ENCODE measurements at regions of chr9 and their contacts with region 1.

Region 1: DNA sequence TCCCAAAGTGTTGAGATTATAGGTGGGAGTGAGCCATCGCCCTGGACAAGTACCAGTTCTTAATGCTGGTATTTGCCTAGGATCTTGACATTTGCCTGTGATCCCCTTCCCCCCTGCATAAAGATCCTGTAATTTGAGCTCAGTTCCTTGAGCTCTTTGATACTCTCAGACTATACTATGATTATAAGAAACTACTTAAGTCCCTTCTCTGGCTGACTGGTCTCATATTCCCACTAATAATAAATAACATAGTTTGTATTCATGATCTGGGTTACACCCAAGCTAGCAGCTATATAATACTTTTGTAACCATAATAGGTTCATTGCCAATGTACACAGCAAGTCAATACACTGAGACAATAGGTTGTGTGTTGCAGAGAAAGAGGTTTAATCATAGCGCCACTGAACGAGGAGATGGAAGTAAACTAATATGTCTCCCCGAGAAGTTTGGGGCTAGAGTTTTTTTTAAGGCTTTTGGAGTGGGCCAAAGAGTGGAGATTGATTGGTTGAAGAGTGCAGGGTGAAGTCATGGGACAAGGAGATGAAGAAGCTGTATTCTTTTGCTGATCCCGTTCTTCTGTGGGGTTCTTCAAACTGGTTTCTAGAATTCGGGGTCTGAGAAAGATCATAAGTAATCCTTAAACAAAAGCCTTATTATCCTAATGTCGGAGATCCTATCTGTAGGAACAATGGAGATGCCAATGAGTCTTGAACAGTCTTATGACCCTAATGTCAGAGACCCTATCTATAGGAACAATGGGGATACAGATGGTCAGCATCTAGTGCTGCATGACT is 20.7 kb upstream of the SHOC1 start:
- DNase-seq: no peak
- H3K4me3 ChIP-seq: no peak overlapping the region
- H3K27ac ChIP-seq: no peak overlapping the region
- H3K4me1 ChIP-seq: no peaks in the 10 kb centered on the region
- H3K27me3 ChIP-seq: no peaks in the 10 kb centered on the region
- CTCF ChIP-seq: no peak
- EP300 ChIP-seq: no peak
- POLR2A ChIP-seq: no peak

Region 2: DNA sequence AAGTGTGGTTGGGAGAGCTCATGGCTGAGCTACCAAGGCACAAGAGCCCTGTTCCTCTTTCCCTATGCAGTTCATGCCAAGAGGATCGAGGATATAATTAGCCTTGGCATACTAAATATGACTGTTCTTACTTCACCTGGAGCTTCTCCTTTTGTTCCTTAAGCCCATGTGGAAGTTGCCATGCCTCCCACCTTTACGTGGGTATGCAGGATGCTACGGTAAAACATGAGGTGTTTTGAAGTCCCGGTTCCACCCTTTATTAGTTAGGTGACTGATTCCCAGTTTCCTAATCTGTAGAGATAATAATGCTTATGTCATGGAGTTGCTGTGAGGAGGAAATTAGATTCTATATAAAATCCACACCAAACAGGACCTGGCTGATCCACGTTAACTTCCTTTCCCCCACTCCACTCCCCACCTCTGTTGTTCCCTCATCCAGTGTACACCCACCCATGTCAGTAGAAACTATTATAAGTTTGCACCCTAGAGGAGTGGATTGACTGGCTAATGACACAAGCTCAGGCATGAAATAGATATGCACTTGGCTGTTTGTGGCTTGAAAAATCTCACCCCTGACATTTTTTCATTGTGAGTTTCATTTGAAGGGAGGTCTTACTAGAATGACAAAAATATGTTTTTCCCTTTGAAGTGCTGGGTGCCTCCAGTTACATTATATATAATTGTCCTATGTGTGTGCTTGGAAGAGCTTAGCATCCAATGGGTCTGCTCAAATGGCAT is 16.1 kb after region 1 on chr9:
- in situ Hi-C with region 1: no loop called
- intact Hi-C with region 1: loop called (anchors 1 kb)
- DNase-seq: no peak
- H3K4me3 ChIP-seq: no peak overlapping the region
- H3K27ac ChIP-seq: no peak overlapping the region
- H3K4me1 ChIP-seq: no peaks in the 10 kb centered on the region
- H3K27me3 ChIP-seq: no peaks in the 10 kb centered on the region
- CTCF ChIP-seq: no peak
- EP300 ChIP-seq: no peak
- POLR2A ChIP-seq: no peak